ENCODE measurements at regions of chr12 and their contacts with region 1.

Region 1: GRCh38 chr12:104763168-104763805 is 194.8 kb downstream of the SLC41A2 start:
- DNase-seq: no peak
- H3K4me3 Mint-ChIP-seq: peak overlapping the region; percentile 20
- H3K27ac Mint-ChIP-seq: peak overlapping the region; percentile 76
- H3K4me1 Mint-ChIP-seq: peaks cover 22% of the 10 kb centered on the region
- H3K27me3 Mint-ChIP-seq: no peaks in the 10 kb centered on the region

Region 2: GRCh38 chr12:104958009-104958945 is 195.0 kb after region 1 on chr12 and contains the start of gene SLC41A2:
- intact Hi-C with region 1: loop called (anchors 10 kb)
- DNase-seq: peak; percentile 65
- H3K4me3 Mint-ChIP-seq: peak within 1 kb of the TSS; percentile 87
- H3K27ac Mint-ChIP-seq: peak within 1 kb of the TSS; percentile 88
- H3K4me1 Mint-ChIP-seq: peaks cover 23% of the 10 kb centered on the region
- H3K27me3 Mint-ChIP-seq: peaks cover 46% of the 10 kb centered on the region
- total RNA-seq, gene SLC41A2: 4.3 and 8.2 TPM in 2 replicates

Region 3: GRCh38 chr12:105330283-105330930 is 567.1 kb after region 1 on chr12 and contains the start of gene C12orf75:
- intact Hi-C with region 1: no loop called
- DNase-seq: peak; percentile 93
- H3K4me3 Mint-ChIP-seq: peak within 1 kb of the TSS; percentile 89
- H3K27ac Mint-ChIP-seq: peak within 1 kb of the TSS; percentile 97
- H3K4me1 Mint-ChIP-seq: peaks cover 66% of the 10 kb centered on the region
- H3K27me3 Mint-ChIP-seq: no peaks in the 10 kb centered on the region
- total RNA-seq, gene C12orf75: 246 and 252 TPM in 2 replicates